Left ventricle myocardium inferior (tissue), 1 donor: ENCODE measurements at regions of chr3 and their contacts with region 1.

Region 1: DNA sequence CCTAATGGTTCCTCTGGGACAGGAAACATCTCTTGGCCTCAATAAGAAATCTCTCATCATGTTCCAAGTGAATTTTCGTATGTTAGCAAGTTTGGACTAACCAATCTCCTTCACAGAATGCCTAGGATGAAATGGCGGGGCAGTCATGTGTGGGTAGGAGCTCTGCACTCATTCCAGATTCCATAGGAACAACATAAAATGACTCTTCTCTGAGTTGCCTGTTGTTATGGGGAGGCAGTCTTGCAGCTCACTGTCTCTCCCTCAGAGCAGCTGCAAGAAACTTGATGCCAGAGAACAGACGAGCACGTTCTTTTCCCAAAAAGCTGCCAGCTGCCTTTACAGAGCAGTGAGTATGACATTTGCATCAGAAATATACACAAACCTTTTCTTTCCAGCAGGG is 34.1 kb downstream of the SPATA12 start:
- DNase-seq: no peak
- H3K4me3 ChIP-seq: no peak overlapping the region
- H3K27ac ChIP-seq: peak overlapping the region; percentile 10
- H3K4me1 ChIP-seq: peaks cover 17% of the 10 kb centered on the region
- H3K27me3 ChIP-seq: no peaks in the 10 kb centered on the region
- CTCF ChIP-seq: no peak

Region 2: DNA sequence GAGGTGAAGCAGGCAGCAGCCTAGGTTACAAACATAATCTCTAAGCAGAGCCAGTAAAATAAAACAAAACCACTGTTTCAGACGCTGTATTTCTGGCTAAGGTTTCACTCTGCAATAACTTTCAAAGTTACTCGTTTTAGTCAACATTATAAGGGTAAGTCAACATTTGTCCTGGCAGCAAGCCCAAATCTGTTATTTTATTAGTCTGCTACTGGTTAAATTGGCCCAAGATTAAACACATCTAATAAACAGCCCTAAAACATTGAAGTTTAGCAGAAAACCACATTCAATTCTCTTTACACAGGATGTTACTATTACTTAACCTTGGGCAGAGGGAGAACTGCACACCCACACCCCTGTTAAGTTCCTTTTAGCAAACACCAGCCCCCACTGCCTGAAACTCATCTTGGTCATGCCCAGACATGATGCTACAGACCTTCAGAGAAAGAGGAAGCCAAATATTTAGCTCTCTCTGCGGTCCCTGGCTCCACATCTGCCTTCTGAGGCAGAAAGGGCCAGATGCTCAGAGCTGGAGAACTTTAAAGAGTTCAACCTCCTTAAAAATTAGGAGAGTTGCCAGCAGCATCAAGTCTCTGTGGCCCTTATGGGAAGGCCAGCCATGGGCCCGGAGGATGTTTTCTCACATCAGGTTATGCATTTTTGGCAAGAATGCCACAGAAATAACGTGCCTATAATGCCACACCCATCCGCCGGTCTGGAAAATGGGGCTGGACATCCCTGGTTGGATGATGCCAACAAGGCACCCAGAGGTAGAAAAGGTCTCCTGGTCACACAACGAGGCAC is 310.7 kb before region 1 on chr3:
- intact Hi-C with region 1: no loop called
- DNase-seq: no peak
- H3K4me3 ChIP-seq: no peak overlapping the region
- H3K27ac ChIP-seq: peak overlapping the region; percentile 80
- H3K4me1 ChIP-seq: peaks cover 87% of the 10 kb centered on the region
- H3K27me3 ChIP-seq: no peaks in the 10 kb centered on the region
- CTCF ChIP-seq: no peak

Region 3: GRCh38 chr3:56997675-56998074 is 96.9 kb before region 1 on chr3:
- intact Hi-C with region 1: loop called (anchors 10 kb)
- DNase-seq: no peak
- H3K4me3 ChIP-seq: no peak overlapping the region
- H3K27ac ChIP-seq: no peak overlapping the region
- H3K4me1 ChIP-seq: peaks cover 13% of the 10 kb centered on the region
- H3K27me3 ChIP-seq: no peaks in the 10 kb centered on the region
- CTCF ChIP-seq: no peak

Region 4: GRCh38 chr3:57227204-57227929 is 132.8 kb after region 1 on chr3 and contains the start of gene APPL1:
- intact Hi-C with region 1: no loop called
- DNase-seq: peak; percentile 95
- H3K4me3 ChIP-seq: peak within 1 kb of the TSS; percentile 80
- H3K27ac ChIP-seq: peak within 1 kb of the TSS; percentile 96
- H3K4me1 ChIP-seq: peaks cover 37% of the 10 kb centered on the region
- H3K27me3 ChIP-seq: no peaks in the 10 kb centered on the region
- CTCF ChIP-seq: no peak
- total RNA-seq, gene APPL1: 51.4 TPM